BJ (cell line): ENCODE measurements at regions of chr6 and their contacts with region 1.

Region 1: GRCh38 chr6:36885461-36886401 is at the start of gene C6orf89:
- DNase-seq: peak; percentile 75
- H3K4me3 ChIP-seq: peak within 1 kb of the TSS; percentile 68
- H3K27me3 ChIP-seq: no peaks in the 10 kb centered on the region
- CTCF ChIP-seq: peak; percentile 86
- polyA plus RNA-seq, gene C6orf89: 66.0 and 71.4 TPM in 2 replicates

Region 2: DNA sequence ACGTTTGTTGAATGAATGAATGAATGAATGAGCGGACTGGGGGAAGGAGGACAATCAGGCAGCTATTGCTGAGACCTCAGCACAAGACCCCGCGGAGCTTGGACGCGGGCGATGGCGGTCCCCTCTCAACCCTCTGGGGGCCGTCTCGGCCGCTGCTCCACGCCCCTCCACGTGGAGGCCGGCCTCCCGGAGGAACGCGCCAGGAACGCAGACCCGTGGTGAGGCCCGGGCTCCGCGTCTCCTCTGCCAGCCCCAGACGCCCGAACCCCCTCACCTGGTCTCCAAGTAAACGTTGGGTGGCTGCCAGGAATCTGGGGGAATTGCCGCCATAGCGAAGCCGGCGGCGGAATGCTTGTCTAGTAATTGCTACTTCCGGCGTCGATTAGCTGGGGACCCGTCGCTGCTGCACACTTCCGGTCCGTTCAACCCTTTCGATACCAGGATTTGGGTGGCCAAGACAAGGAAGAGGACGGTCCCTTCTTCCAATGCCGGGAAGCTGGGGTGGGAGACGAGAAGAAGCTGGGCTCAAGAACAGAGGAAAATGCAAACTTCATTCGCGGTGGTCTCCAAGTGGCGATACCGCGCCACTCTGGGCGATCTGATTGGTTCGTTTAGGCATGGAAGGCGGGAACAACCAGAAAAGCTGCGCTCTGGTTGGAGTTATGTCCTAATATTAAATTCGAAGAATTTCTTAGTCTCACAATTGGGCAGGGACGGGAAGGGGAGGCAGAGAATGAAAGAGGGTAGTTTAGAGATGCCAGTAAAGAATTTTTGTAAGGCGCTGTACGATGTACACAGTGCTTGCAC is 11.1 kb before region 1 on chr6 and contains the start of gene PPIL1:
- CTCF ChIA-PET with region 1: interaction called, 40 read pairs
- POLR2A ChIA-PET with region 1: no interaction called
- DNase-seq: no peak
- H3K4me3 ChIP-seq: peak within 1 kb of the TSS; percentile 55
- H3K27me3 ChIP-seq: no peaks in the 10 kb centered on the region
- CTCF ChIP-seq: no peak
- polyA plus RNA-seq, gene PPIL1: 23.4 and 34.8 TPM in 2 replicates

Region 3: GRCh38 chr6:36912586-36912985 is 26.9 kb after region 1 on chr6:
- CTCF ChIA-PET with region 1: interaction called, 18 read pairs
- POLR2A ChIA-PET with region 1: no interaction called
- DNase-seq: peak; percentile 84
- H3K4me3 ChIP-seq: no peak overlapping the region
- H3K27me3 ChIP-seq: no peaks in the 10 kb centered on the region
- CTCF ChIP-seq: no peak

Region 4: DNA sequence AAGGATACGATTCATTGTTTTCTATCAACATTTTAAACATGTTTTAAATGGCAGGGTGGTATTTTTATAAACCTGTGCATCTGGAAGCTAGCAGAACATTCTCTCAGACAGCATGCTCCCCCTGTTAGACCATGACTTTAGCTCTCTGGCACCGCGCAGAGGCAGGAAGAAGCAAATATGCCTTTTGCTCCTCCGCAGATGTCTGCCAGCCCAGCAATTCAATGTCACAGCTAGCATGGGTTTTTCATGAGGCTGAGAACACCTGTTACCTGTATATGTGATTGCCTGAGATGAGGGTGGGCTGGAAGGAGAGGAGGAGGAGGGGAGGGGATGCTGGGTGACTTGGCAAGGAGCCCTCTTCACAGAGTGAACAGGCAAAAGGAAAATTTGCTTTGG is 93.6 kb after region 1 on chr6:
- CTCF ChIA-PET with region 1: interaction called, 61 read pairs
- POLR2A ChIA-PET with region 1: no interaction called
- DNase-seq: no peak
- H3K4me3 ChIP-seq: no peak overlapping the region
- H3K27me3 ChIP-seq: no peaks in the 10 kb centered on the region
- CTCF ChIP-seq: peak; percentile 90